Panc1 (cell line): ENCODE measurements at regions of chr2 and their contacts with region 1.

Region 1: DNA sequence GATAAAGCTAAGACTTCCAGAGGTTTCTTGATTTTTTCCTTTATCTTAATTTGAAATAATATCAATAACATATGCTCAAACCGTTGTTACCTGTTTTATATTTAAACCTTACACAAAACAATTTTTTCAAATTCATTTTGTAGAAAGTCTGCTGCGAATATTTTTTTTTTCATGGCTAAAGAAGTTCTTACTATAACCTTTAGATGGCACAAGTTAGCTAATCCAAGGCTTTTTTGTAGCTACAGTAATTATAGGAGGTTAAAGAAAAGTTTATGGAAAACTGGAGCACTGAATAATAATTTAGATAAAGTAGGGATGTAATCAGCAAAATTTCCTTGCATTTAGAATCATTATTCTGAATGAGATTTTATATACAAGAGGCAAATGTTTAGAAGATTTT is 78.0 kb upstream of the PNPT1 start:
- DNase-seq: peak; percentile 25
- ATAC-seq: no peak
- H3K4me3 ChIP-seq: no peak overlapping the region
- H3K27ac ChIP-seq: no peak overlapping the region
- H3K4me1 ChIP-seq: no peaks in the 10 kb centered on the region
- H3K27me3 ChIP-seq: no peaks in the 10 kb centered on the region
- CTCF ChIP-seq: peak; percentile 67; the same call in 1 of the 2 replicates

Region 2: GRCh38 chr2:55581435-55581834 is 190.2 kb before region 1 on chr2:
- CTCF ChIA-PET with region 1: no interaction called
- POLR2A ChIA-PET with region 1: no interaction called
- in situ Hi-C with region 1: no loop called
- intact Hi-C with region 1: no loop called
- DNase-seq: no peak
- ATAC-seq: no peak
- H3K4me3 ChIP-seq: no peak overlapping the region
- H3K27ac ChIP-seq: no peak overlapping the region
- H3K4me1 ChIP-seq: no peaks in the 10 kb centered on the region
- H3K27me3 ChIP-seq: no peaks in the 10 kb centered on the region
- CTCF ChIP-seq: peak; percentile 56; the same call in 1 of the 2 replicates

Region 3: DNA sequence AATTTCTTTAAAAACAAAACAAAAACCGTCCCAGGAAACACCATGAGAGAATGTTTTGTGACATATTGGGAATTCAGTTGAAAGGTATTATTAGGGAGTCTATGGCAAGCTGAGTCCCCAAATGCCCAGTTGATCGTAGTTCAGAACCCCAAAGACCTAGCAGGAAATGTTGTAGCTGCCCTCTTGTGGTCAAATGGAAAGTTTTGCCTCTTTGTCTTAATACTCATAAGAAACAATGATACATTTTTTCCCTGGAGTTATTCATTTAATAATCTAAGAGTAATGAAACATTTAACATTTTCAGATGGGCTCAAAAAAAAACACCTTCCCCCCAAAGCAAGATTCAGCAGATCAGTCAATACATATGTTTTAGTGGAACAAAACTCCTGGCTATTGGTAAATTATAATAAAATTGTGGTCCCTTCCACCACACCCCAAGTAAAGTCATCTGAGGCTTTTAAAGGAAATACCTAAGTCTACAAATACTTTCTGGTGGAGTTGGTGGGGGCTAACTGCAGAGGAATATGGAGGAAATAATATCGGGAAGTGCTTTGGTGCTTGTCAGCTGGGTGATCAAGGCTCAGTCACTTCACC is 189.8 kb after region 1 on chr2:
- CTCF ChIA-PET with region 1: interaction called, 10 read pairs
- POLR2A ChIA-PET with region 1: no interaction called
- in situ Hi-C with region 1: no loop called
- intact Hi-C with region 1: loop called (anchors 1 kb)
- DNase-seq: peak; percentile 50
- ATAC-seq: peak; percentile 76; the same call in 1 of the 2 replicates
- H3K4me3 ChIP-seq: no peak overlapping the region
- H3K27ac ChIP-seq: no peak overlapping the region
- H3K4me1 ChIP-seq: no peaks in the 10 kb centered on the region
- H3K27me3 ChIP-seq: no peaks in the 10 kb centered on the region
- CTCF ChIP-seq: peak; percentile 78

Region 4: GRCh38 chr2:56009758-56010458 is 238.3 kb after region 1 on chr2:
- CTCF ChIA-PET with region 1: no interaction called
- POLR2A ChIA-PET with region 1: no interaction called
- in situ Hi-C with region 1: no loop called
- intact Hi-C with region 1: loop called (anchors 5 kb)
- DNase-seq: peak; percentile 15
- ATAC-seq: no peak
- H3K4me3 ChIP-seq: no peak overlapping the region
- H3K27ac ChIP-seq: no peak overlapping the region
- H3K4me1 ChIP-seq: peaks cover 3% of the 10 kb centered on the region; the same call in 1 of the 2 replicates
- H3K27me3 ChIP-seq: no peaks in the 10 kb centered on the region
- CTCF ChIP-seq: peak; percentile 62; the same call in 1 of the 2 replicates